ENCODE measurements at regions of chr9 and their contacts with region 1.

Region 1: DNA sequence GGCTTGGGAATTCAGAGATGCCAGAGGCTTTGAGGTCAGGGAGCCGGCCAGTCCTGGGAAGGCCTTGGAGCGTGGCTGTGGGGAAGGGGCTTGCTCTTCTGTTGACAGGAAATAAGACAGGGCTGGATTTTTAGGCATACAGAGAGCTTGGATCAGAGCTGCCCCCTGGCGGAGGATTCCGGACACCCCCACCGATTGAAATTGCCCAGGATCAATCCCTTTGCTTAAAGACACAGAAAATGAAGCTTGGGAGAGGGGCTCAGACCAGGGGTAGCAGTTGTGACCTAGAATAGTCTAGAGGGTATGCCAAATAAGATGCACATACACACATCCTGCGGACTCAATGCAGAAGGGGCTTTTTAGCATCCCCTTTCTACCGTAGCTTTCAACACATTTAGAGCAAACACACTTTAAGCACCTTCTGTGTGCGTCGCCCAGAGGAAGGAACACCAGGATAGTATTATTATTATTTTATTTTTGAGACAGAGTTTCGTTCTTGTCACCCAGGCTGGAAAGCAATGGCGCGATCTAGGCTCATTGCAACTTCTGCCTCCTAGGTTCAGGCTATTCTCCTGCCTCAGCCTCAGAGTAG is 1.7 kb upstream of the NTMT1 start:
- DNase-seq: no peak
- ATAC-seq: peak; percentile 47
- H3K4me3 ChIP-seq: no peak overlapping the region
- H3K27ac ChIP-seq: no peak overlapping the region
- H3K4me1 ChIP-seq: peaks cover 20% of the 10 kb centered on the region
- H3K27me3 ChIP-seq: no peaks in the 10 kb centered on the region
- CTCF ChIP-seq: peak; percentile 88

Region 2: GRCh38 chr9:129166623-129167557 is 457.4 kb before region 1 on chr9:
- CTCF ChIA-PET with region 1: interaction called, 13 read pairs
- POLR2A ChIA-PET with region 1: no interaction called
- in situ Hi-C with region 1: no loop called
- intact Hi-C with region 1: no loop called
- DNase-seq: no peak
- ATAC-seq: peak; percentile 68
- H3K4me3 ChIP-seq: 0 out of 4 replicates have a peak overlapping the region, but pooled peaks of 1 of the 2 experiments have one; percentile 26
- H3K27ac ChIP-seq: peak overlapping the region; percentile 68; the same call in 1 of the 2 replicates
- H3K4me1 ChIP-seq: peaks cover 14% of the 10 kb centered on the region
- H3K27me3 ChIP-seq: no peaks in the 10 kb centered on the region
- CTCF ChIP-seq: no peak